PC-3 (cell line): ENCODE measurements at regions of chr12 and their contacts with region 1.

Region 1: GRCh38 chr12:27840244-27840999 is 60.4 kb upstream of the MANSC4 start:
- DNase-seq: peak; percentile 48
- ATAC-seq: peak; percentile 30
- H3K4me3 ChIP-seq: no peak overlapping the region
- H3K27ac ChIP-seq: no peak overlapping the region
- H3K4me1 ChIP-seq: peaks cover 17% of the 10 kb centered on the region
- H3K27me3 ChIP-seq: no peaks in the 10 kb centered on the region
- CTCF ChIP-seq: peak; percentile 90

Region 2: GRCh38 chr12:27733052-27733656 is 107.3 kb before region 1 on chr12:
- CTCF ChIA-PET with region 1: interaction called, 3 read pairs
- POLR2A ChIA-PET with region 1: no interaction called
- intact Hi-C with region 1: loop called (anchors 1 kb)
- DNase-seq: peak; percentile 82
- ATAC-seq: peak; percentile 47
- H3K4me3 ChIP-seq: no peak overlapping the region
- H3K27ac ChIP-seq: no peak overlapping the region
- H3K4me1 ChIP-seq: 0 out of 2 replicates have a peak, but pooled peaks cover 4% of the 10 kb centered on the region
- H3K27me3 ChIP-seq: no peaks in the 10 kb centered on the region
- CTCF ChIP-seq: peak; percentile 98

Region 3: DNA sequence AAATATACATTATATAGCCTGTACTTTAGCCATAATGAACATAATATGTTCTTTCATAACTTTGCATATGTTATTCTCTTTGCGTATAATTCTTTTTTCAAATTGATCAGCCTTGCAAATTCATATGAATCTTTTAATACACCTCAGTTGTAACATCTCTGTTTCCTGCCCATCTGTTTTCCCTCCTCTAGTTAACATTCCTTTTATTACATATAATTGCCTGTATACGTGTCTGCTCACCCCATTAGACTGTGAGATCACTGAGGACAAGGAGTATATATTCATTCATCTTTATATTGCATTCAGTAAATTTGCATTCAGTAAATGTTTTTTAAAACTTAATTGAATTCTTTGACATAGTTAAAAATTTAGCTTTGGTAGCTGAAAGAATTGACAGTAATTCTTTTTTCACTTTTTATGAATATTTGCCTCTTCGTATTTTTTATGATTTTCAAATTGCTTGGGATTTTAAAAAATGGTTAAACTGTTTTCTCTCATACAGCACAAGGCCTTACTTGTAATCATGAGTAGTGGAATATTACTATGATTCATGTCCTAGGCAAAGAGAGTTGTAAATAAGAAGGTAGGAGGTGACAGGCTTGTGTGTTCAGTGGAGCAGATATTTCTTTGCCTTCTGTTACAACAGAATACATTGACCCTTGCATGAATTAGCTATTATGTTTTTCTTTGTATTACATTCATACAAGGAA is 93.2 kb before region 1 on chr12:
- CTCF ChIA-PET with region 1: interaction called, 7 read pairs
- POLR2A ChIA-PET with region 1: no interaction called
- intact Hi-C with region 1: loop called (anchors 2 kb)
- DNase-seq: peak; percentile 85
- ATAC-seq: peak; percentile 86
- H3K4me3 ChIP-seq: peak overlapping the region; percentile 47
- H3K27ac ChIP-seq: peak overlapping the region; percentile 94
- H3K4me1 ChIP-seq: peaks cover 49% of the 10 kb centered on the region
- H3K27me3 ChIP-seq: no peaks in the 10 kb centered on the region
- CTCF ChIP-seq: no peak

Region 4: GRCh38 chr12:27779920-27780611 is 60.4 kb before region 1 on chr12 and contains the starts of genes KLHL42 and MANSC4:
- CTCF ChIA-PET with region 1: interaction called, 4 read pairs
- POLR2A ChIA-PET with region 1: no interaction called
- intact Hi-C with region 1: loop called (anchors 2 kb)
- DNase-seq: peak; percentile 72
- ATAC-seq: peak; percentile 64
- H3K4me3 ChIP-seq: peak within 1 kb of the TSS; percentile 78
- H3K27ac ChIP-seq: peak within 1 kb of the TSS; percentile 64
- H3K4me1 ChIP-seq: peaks cover 38% of the 10 kb centered on the region
- H3K27me3 ChIP-seq: no peaks in the 10 kb centered on the region
- CTCF ChIP-seq: no peak
- total RNA-seq, gene KLHL42: 74.2 and 82.6 TPM in 2 replicates
- total RNA-seq, gene MANSC4: 1.9 and 4.1 TPM in 2 replicates

Region 5: DNA sequence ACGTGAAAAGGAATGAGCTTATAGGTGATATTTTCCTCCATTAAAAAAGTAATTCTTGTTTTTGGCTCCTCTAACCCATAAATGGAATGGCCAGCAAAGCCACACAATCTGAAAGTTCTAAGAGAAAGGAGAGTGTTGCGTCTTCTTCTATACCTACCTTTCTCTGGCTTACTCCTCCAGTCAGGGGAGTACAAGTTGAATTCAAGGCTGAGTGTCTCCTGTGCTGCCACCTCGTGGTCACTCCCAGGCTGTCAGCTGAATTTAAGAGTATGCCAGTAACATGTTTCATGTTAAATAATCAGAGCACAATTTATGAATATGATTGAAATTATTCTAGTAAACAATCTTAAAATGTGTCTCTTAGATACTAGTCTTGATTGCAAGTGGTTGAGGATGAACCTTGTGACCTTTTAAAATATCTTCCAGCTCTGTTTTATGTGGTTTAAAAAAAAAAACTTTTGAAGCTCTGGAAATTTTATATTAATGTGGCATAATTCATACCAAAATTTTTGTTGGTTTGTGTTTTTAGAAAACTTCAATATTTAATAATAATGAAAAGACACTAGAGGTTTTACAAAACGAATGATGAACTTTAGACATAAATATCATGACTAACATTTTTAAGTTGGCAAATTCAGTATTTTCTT is 100.5 kb after region 1 on chr12:
- CTCF ChIA-PET with region 1: no interaction called
- POLR2A ChIA-PET with region 1: no interaction called
- intact Hi-C with region 1: loop called (anchors 2 kb)
- DNase-seq: peak; percentile 96
- ATAC-seq: peak; percentile 100
- H3K4me3 ChIP-seq: no peak overlapping the region
- H3K27ac ChIP-seq: no peak overlapping the region
- H3K4me1 ChIP-seq: no peaks in the 10 kb centered on the region
- H3K27me3 ChIP-seq: no peaks in the 10 kb centered on the region
- CTCF ChIP-seq: peak; percentile 99